ENCODE measurements at regions of chr7 and their contacts with region 1.

Region 1: DNA sequence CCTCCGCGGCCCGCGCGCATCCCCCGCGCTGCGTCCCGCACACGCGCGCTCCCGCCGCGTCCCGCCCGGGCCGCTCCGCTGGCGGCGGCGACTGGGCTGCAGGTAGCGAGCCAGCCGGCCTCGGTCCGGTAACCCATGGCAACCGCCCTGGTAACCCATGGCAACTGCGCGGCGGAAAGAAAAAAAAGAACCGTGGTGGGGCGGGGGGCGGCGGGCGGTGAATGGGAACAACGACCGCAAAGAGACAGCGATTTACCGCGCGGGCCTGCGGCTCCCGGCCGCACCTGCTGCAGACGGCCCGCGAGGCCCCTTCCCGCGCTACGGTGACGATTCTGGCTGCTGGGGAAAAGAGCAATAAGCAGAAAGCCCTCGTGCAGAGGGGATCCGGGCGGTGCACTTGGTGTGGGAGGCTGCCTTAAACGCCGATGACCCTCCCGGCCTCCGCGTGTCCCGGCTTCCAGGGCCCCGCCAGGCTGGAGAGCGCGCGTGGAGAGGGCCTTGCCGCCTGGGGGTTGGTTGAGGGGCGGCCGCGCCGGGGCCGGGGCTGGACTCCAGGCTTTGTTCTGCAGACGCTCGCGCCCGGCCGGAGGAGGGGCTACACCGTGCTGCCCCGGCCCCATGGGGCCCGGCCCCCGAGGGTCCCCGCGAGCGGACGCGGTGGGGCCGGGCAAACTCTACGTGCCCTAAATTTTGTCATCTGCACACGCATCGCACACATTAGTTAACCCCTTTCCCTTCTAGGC is 84.7 kb downstream of the SNX10 start:
- DNase-seq: peak; percentile 84
- H3K4me3 Mint-ChIP-seq: peak overlapping the region; percentile 84
- H3K27ac Mint-ChIP-seq: peak overlapping the region; percentile 88
- H3K4me1 Mint-ChIP-seq: peaks cover 5% of the 10 kb centered on the region
- H3K27me3 Mint-ChIP-seq: peaks cover 38% of the 10 kb centered on the region

Region 2: GRCh38 chr7:26127411-26127810 is 248.9 kb before region 1 on chr7:
- intact Hi-C with region 1: no loop called
- DNase-seq: no peak
- H3K4me3 Mint-ChIP-seq: no peak overlapping the region
- H3K27ac Mint-ChIP-seq: no peak overlapping the region
- H3K4me1 Mint-ChIP-seq: peaks cover 3% of the 10 kb centered on the region
- H3K27me3 Mint-ChIP-seq: peaks cover 23% of the 10 kb centered on the region

Region 3: DNA sequence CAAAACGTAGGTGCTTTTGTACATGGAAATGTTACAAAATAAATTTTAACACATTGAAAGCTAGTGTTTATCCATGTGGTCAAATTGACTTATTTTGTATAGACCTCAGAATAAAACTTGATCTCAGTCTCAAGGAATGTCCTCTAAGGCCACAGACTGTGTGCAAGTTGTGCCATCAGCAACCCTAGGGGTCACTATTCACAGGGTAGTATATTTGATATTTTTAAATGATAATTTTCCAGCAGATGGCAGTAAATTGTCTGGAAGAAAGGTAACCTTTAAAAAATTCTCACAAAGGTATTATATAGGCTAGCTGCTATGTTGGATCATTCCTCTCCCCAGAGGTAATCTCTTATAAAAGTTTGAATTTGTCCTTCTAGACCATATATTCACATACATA is 97.6 kb before region 1 on chr7:
- intact Hi-C with region 1: no loop called
- DNase-seq: no peak
- H3K4me3 Mint-ChIP-seq: peak overlapping the region; percentile 35
- H3K27ac Mint-ChIP-seq: no peak overlapping the region
- H3K4me1 Mint-ChIP-seq: peaks cover 17% of the 10 kb centered on the region
- H3K27me3 Mint-ChIP-seq: peaks cover 3% of the 10 kb centered on the region

Region 4: GRCh38 chr7:26398756-26399501 is 22.6 kb after region 1 on chr7:
- intact Hi-C with region 1: loop called (anchors 1 kb)
- DNase-seq: peak; percentile 75
- H3K4me3 Mint-ChIP-seq: peak overlapping the region; percentile 92
- H3K27ac Mint-ChIP-seq: peak overlapping the region; percentile 92
- H3K4me1 Mint-ChIP-seq: peaks cover 10% of the 10 kb centered on the region
- H3K27me3 Mint-ChIP-seq: peaks cover 47% of the 10 kb centered on the region

Region 5: GRCh38 chr7:26457696-26458327 is 81.5 kb after region 1 on chr7:
- intact Hi-C with region 1: loop called (anchors 5 kb)
- DNase-seq: no peak
- H3K4me3 Mint-ChIP-seq: no peak overlapping the region
- H3K27ac Mint-ChIP-seq: no peak overlapping the region
- H3K4me1 Mint-ChIP-seq: no peaks in the 10 kb centered on the region
- H3K27me3 Mint-ChIP-seq: peaks cover 9% of the 10 kb centered on the region

Region 6: DNA sequence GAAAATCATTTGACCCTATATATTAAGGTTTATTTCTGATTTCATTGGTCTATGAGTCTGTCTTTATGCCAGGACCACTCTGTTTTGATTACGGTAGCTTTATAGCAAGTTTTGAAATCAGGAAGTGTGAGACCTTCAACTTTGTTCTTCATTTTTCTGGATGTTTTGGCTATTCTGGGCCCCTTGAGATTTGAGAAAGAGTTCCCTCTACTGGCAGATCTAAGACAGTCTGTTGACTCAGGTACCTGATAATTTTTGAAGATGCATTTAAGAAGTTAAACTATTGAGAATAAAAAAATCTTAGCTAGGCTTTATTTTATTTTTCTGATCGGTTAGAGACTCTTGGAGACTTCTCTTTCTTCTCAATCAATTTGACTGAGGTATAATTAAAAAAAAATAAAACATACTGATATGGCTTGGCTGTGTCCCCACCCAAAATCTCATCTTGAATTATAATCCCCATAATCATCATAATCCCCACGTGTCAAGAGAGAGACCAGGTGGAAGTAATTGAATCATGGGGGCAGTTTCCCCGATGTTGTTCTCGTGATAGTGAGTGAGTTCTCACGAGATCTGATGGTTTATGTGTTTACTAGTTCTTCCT is 124.5 kb after region 1 on chr7:
- intact Hi-C with region 1: loop called (anchors 2 kb)
- DNase-seq: no peak
- H3K4me3 Mint-ChIP-seq: no peak overlapping the region
- H3K27ac Mint-ChIP-seq: no peak overlapping the region
- H3K4me1 Mint-ChIP-seq: no peaks in the 10 kb centered on the region
- H3K27me3 Mint-ChIP-seq: peaks cover 5% of the 10 kb centered on the region

Region 7: GRCh38 chr7:26667500-26668133 is 291.3 kb after region 1 on chr7:
- intact Hi-C with region 1: loop called (anchors 1 kb)
- DNase-seq: peak; percentile 89
- H3K4me3 Mint-ChIP-seq: no peak overlapping the region
- H3K27ac Mint-ChIP-seq: no peak overlapping the region
- H3K4me1 Mint-ChIP-seq: peaks cover 10% of the 10 kb centered on the region
- H3K27me3 Mint-ChIP-seq: peaks cover 40% of the 10 kb centered on the region